Activated T-helper 2 cell treated with anti-CD3 and anti-CD28 coated beads, Interferon-gamma antibody, Interleukin-2, Interleukin-4, amounts not matched to agents 10 μg/mL and 5 μg/mL and 100 μg/mL, durations not matched to agents 14 hours and 24 hours and 36 hours (primary cell): ENCODE measurements at regions of chr5 and their contacts with region 1.

Region 1: GRCh38 chr5:180689071-180689694 is 39.8 kb upstream of the FLT4 start:
- DNase-seq: no peak
- H3K4me3 Mint-ChIP-seq: peak overlapping the region; percentile 20
- H3K27ac Mint-ChIP-seq: peak overlapping the region; percentile 2
- H3K4me1 Mint-ChIP-seq: peaks cover 25% of the 10 kb centered on the region
- H3K27me3 Mint-ChIP-seq: peaks cover 13% of the 10 kb centered on the region

Region 2: GRCh38 chr5:180563994-180564393 is 125.2 kb before region 1 on chr5:
- intact Hi-C with region 1: loop called (anchors 2 kb)
- DNase-seq: no peak
- H3K4me3 Mint-ChIP-seq: no peak overlapping the region
- H3K27ac Mint-ChIP-seq: no peak overlapping the region
- H3K4me1 Mint-ChIP-seq: peaks cover 37% of the 10 kb centered on the region
- H3K27me3 Mint-ChIP-seq: no peaks in the 10 kb centered on the region